Activated CD4-positive, alpha-beta T cell treated with anti-CD3 and anti-CD28 coated beads, Interleukin-2, amount 10 ng/mL, durations not matched to agents 24 days and 14 days (primary cell): ENCODE measurements at regions of chr2 and their contacts with region 1.

Region 1: DNA sequence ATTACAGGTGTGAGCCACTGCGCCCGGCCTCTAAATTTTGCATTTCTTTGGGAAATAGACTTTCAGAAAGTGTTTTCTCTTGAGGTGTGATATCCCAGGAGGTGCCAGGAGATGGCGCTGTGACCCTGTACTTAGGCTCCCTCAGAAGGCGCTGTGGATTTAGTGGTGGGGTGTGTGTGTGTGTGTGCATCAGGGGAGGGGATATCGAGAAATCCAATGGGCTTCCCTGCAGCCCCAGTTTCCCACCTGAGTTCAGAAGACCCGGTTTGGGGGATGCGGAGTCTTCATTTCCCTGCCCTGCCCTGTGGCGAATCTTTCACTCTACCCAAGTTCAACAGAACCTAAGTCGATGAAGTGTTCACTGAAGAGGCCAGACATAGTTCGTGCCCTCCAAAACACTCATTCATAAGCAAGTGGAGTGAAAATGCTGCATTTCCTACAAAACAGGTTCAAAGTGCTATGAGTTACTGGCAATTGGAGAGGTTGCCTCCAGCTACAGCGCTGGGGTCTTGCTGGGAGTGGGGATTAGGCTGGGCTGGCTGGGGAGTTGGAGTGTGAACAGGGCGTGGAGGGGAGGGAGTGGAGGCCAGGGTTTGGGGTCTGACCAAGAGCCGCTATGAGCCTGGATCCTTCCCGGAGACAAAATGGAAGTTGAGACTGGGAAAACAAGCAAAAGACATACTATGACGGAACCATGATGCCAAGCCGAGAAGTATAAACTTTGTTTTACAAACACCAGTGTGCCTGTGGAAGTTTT is 6.5 kb upstream of the WNT6 start:
- DNase-seq: peak; percentile 86
- H3K4me3 Mint-ChIP-seq: no peak overlapping the region
- H3K27ac Mint-ChIP-seq: no peak overlapping the region
- H3K4me1 Mint-ChIP-seq: peaks cover 4% of the 10 kb centered on the region
- H3K27me3 Mint-ChIP-seq: peaks cover 60% of the 10 kb centered on the region

Region 2: DNA sequence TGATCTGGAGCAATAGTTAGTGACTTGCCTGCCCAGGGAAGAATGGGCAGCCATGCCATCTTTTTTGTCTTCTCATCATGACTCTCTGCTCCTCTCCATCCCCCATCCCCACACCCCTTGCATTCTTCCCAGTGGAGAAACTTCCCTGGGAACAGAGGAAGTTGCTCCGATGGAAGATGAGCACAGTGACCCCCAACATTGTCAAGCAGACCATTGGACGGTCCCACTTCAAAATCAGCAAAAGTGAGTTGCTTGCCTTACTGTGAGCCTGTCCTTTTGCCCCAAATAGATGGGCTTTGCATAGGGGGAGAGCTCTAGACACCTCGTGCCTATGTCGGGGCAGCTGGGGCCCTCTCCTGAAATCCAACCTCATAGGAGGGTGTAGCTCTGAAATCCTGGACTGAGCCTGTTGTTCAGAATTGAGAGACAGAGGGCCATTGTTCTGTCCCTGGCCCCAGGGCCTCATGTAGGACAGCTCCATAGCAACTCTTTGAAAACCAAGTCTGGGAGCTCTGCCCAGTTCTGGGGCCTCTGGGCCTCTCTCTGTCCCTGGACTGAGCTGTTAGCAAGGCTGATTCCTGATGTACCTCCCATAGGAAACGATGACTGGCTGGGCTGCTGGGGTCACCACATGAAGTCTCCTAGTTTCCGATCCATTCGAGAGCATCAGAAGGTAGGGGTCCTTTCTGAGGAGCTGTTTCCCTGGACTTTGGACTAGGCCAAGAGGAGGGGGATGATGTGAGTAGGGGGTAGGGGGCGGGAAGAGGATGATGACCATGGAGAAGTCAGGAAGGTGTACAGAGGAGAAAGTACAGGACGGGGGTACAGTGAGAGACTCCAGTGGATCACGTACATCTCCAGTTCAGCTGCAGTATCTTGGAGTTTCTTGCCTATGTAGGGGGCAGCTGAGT is 107.3 kb before region 1 on chr2:
- intact Hi-C with region 1: no loop called
- DNase-seq: no peak
- H3K4me3 Mint-ChIP-seq: no peak overlapping the region
- H3K27ac Mint-ChIP-seq: peak overlapping the region; percentile 18
- H3K4me1 Mint-ChIP-seq: peaks cover 22% of the 10 kb centered on the region
- H3K27me3 Mint-ChIP-seq: no peaks in the 10 kb centered on the region

Region 3: GRCh38 chr2:218876562-218877219 is 23.6 kb after region 1 on chr2:
- intact Hi-C with region 1: loop called (anchors 2 kb)
- DNase-seq: peak; percentile 92
- H3K4me3 Mint-ChIP-seq: no peak overlapping the region
- H3K27ac Mint-ChIP-seq: no peak overlapping the region
- H3K4me1 Mint-ChIP-seq: peaks cover 29% of the 10 kb centered on the region
- H3K27me3 Mint-ChIP-seq: peaks cover 71% of the 10 kb centered on the region